Panc1 (cell line): ENCODE measurements at regions of chr12 and their contacts with region 1.

Region 1: GRCh38 chr12:55823419-55823818 is 5.6 kb downstream of the ORMDL2 start:
- DNase-seq: no peak
- ATAC-seq: no peak
- H3K4me3 ChIP-seq: no peak overlapping the region
- H3K27ac ChIP-seq: no peak overlapping the region
- H3K4me1 ChIP-seq: peaks cover 22% of the 10 kb centered on the region
- H3K27me3 ChIP-seq: no peaks in the 10 kb centered on the region
- CTCF ChIP-seq: no peak

Region 2: GRCh38 chr12:55845785-55846496 is 22.5 kb after region 1 on chr12:
- CTCF ChIA-PET with region 1: no interaction called
- POLR2A ChIA-PET with region 1: interaction called, 12 read pairs
- in situ Hi-C with region 1: no loop called
- intact Hi-C with region 1: no loop called
- DNase-seq: no peak
- ATAC-seq: no peak
- H3K4me3 ChIP-seq: no peak overlapping the region
- H3K27ac ChIP-seq: no peak overlapping the region
- H3K4me1 ChIP-seq: no peaks in the 10 kb centered on the region
- H3K27me3 ChIP-seq: peaks cover 1% of the 10 kb centered on the region; the same call in 1 of the 2 replicates
- CTCF ChIP-seq: no peak

Region 3: GRCh38 chr12:55926738-55927587 is 103.5 kb after region 1 on chr12:
- CTCF ChIA-PET with region 1: interaction called, 22 read pairs
- POLR2A ChIA-PET with region 1: interaction called, 13 read pairs
- in situ Hi-C with region 1: no loop called
- intact Hi-C with region 1: loop called (anchors 2 kb)
- DNase-seq: peak; percentile 84
- ATAC-seq: peak; percentile 89
- H3K4me3 ChIP-seq: peak overlapping the region; percentile 67 to 91
- H3K27ac ChIP-seq: peak overlapping the region; percentile 100
- H3K4me1 ChIP-seq: peaks cover 32% of the 10 kb centered on the region
- H3K27me3 ChIP-seq: no peaks in the 10 kb centered on the region
- CTCF ChIP-seq: peak; percentile 96

Region 4: GRCh38 chr12:56321027-56321426 is 497.6 kb after region 1 on chr12:
- CTCF ChIA-PET with region 1: no interaction called
- POLR2A ChIA-PET with region 1: no interaction called
- in situ Hi-C with region 1: no loop called
- intact Hi-C with region 1: no loop called
- DNase-seq: no peak
- ATAC-seq: no peak
- H3K4me3 ChIP-seq: no peak overlapping the region
- H3K27ac ChIP-seq: no peak overlapping the region
- H3K4me1 ChIP-seq: no peaks in the 10 kb centered on the region
- H3K27me3 ChIP-seq: no peaks in the 10 kb centered on the region
- CTCF ChIP-seq: no peak